Pancreas (tissue), 10 donors: ENCODE measurements at regions of chr13 and their contacts with region 1.

Region 1: GRCh38 chr13:25574437-25575411 is 202.9 kb downstream of the ATP8A2 start:
- DNase-seq: peak in 4 of 6 donors; percentile 56 to 84 (median 68)
- ATAC-seq: peak; percentile 73 to 97 (median 96)
- H3K4me3 ChIP-seq: no peak overlapping the region
- H3K27ac ChIP-seq: no peak overlapping the region
- H3K4me1 ChIP-seq: no peaks in the 10 kb centered on the region
- H3K27me3 ChIP-seq: peaks cover 0 to 3% (median 0%) of the 10 kb centered on the region in 4 donors
- CTCF ChIP-seq: peak; percentile 61 to 79 (median 69)

Region 2: DNA sequence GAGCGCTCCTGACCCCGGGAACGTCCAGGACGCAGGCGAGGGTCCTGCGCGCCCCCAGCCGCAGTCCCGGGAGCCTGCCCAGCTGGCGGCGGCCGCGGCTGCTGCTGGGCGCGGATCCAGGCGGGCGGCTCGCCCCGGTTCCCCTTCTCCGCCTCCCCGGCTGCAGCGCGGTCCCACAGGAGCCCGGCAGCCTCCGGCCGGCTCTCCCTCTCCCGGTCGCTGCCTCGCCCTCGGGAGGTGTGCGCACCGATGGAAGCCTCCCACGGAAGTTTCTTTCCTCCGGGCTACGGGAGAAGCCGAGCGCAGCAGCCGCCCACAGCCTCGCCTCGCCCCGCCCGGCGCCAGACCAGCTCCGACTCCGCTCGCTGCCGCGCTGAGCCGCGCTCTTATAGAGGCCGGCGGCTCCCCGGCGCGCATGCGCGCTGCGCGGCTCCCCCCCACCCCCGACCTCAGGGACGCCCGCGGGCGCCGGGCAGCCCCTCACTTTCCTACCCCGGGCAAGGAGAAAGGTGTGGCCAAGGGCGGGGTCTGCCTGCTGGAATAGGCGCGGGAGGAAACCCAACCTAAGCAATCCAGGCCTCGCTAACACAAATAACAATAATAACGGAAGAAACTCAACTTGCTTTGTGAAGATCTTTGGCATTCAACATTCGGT is 477.1 kb after region 1 on chr13 and contains the start of gene SHISA2:
- intact Hi-C with region 1: loop called in 1 of 3 experiments (anchors 5 kb)
- DNase-seq: peak in 4 of 6 donors; percentile 21 to 74 (median 53)
- ATAC-seq: peak; percentile 87 to 91 (median 88)
- H3K4me3 ChIP-seq: peak within 1 kb of the TSS; percentile 14 to 60 (median 38)
- H3K27ac ChIP-seq: no peak within 1 kb of the TSS
- H3K4me1 ChIP-seq: no peaks in the 10 kb centered on the region
- H3K27me3 ChIP-seq: peaks cover 0 to 7% (median 2%) of the 10 kb centered on the region in 4 donors
- CTCF ChIP-seq: no peak
- total RNA-seq, gene SHISA2: 0.31 to 0.98 (median 0.51) TPM

Region 3: GRCh38 chr13:26062844-26063444 is 488.2 kb after region 1 on chr13:
- intact Hi-C with region 1: loop called (anchors 5 to 10 kb)
- DNase-seq: peak in 2 of 6 donors; percentile 35 to 45
- ATAC-seq: peak; percentile 48 to 92 (median 86)
- H3K4me3 ChIP-seq: no peak overlapping the region
- H3K27ac ChIP-seq: no peak overlapping the region
- H3K4me1 ChIP-seq: no peaks in the 10 kb centered on the region
- H3K27me3 ChIP-seq: no peaks in the 10 kb centered on the region
- CTCF ChIP-seq: peak; percentile 11 to 61 (median 32)

Region 4: DNA sequence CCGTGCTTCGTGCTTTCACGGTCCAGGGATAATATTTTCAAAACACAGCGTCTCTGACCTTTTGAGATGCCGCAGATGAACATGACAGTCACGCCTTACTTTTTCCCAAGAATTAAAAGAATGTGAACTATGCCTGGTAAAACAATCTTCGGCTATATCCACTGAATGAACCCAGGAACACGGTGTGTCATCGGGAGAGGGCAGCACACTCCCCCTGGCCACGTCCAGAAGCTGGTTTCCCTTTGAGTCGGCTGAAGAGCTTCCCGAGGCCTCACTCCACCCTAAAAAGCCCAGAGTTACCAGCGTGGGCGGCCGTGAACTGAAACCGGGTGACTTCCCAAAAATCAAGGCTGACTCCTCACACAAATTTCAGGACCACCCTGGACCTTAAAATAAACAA is 500.0 kb after region 1 on chr13:
- intact Hi-C with region 1: loop called (anchors 5 to 10 kb)
- DNase-seq: no peak
- ATAC-seq: peak in 1 of 4 donors; percentile 36
- H3K4me3 ChIP-seq: no peak overlapping the region
- H3K27ac ChIP-seq: no peak overlapping the region
- H3K4me1 ChIP-seq: no peaks in the 10 kb centered on the region
- H3K27me3 ChIP-seq: no peaks in the 10 kb centered on the region
- CTCF ChIP-seq: no peak

Region 5: DNA sequence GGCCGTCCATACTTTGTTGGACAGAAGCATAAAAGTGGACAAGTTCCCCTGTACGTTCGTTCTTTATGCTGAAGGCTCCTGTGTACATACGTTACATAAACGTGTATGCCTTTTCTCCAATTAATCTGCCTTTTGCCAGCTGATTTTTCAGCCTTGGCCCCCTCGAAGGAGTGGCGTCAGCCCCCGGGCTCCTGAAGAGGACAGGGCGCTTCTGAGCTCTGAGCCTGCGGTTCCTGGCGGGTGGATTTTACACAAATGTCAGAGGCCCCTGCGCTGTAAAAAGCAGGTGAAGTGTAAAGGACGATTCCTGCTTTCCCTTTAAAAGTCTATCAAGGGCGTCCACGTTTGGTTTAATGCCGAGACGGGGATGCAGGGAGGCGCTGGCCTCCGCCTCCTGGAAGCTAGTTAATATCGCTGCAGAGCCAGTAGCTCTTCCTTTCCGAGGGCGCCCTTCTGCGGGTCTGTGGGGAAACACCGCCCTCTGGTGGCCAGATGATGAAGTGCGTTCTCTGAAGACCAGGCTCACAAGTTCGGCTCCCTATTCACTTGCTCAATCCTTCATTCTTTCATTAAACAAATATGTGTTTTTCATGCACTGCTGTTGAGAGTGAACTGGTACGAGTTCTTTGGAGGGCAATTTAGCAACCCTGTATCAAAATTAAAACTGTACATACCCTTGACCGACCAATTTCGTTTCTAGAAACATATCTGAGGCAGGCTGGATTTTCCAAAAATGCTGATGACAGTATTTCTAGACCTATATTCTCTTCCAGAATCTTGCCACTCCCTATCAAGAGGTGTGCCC is 1123.9 kb after region 1 on chr13:
- intact Hi-C with region 1: loop called in 1 of 3 experiments (anchors 10 kb)
- DNase-seq: peak; percentile 52 to 94 (median 80)
- ATAC-seq: peak; percentile 94 to 100 (median 96)
- H3K4me3 ChIP-seq: no peak overlapping the region
- H3K27ac ChIP-seq: no peak overlapping the region
- H3K4me1 ChIP-seq: peaks cover 0 to 3% (median 0%) of the 10 kb centered on the region in 3 donors
- H3K27me3 ChIP-seq: no peaks in the 10 kb centered on the region
- CTCF ChIP-seq: peak; percentile 96 to 98 (median 97)